IMR-90 (cell line): ENCODE measurements at regions of chr2 and their contacts with region 1.

Region 1: GRCh38 chr2:98649135-98649991 is 41.0 kb downstream of the UNC50 start:
- DNase-seq: peak; percentile 71
- ATAC-seq: peak; percentile 100
- H3K4me3 ChIP-seq: no peak overlapping the region
- H3K27ac ChIP-seq: no peak overlapping the region
- H3K4me1 ChIP-seq: no peaks in the 10 kb centered on the region
- H3K27me3 ChIP-seq: peaks cover 4% of the 10 kb centered on the region
- CTCF ChIP-seq: peak; percentile 96
- POLR2A ChIP-seq: no peak
- RAD21 ChIP-seq: peak; percentile 92

Region 2: DNA sequence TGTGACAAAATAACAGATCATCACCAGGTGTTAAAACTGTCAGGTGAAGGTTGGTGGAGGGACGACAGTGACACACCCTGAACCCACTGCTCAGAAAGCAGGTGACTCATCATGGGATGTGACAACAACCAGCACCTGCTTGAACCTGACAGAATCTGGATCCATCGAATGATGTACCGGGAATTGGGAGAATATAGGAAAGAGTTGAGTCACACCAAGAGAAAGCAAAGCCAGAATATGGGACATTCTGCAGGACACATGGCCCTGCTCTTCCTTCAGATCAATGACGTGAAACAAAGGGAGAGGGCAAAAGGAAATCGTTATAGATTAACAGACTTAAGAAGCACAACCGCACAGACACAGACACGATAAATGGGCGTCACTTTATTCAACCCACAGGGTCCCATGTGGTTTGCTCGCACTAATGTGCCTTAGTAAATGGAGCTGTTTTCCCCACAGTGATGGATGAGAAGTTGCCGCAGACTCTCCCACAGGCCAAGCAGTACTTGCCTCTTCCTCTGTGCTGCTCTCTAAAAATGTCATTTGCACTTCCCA is 186.5 kb after region 1 on chr2:
- CTCF ChIA-PET with region 1: interaction called, 12 read pairs
- POLR2A ChIA-PET with region 1: no interaction called
- dilution Hi-C with region 1: no loop called
- in situ Hi-C with region 1: loop called (anchors 10 kb)
- intact Hi-C with region 1: loop called (anchors 1 kb)
- DNase-seq: no peak
- ATAC-seq: no peak
- H3K4me3 ChIP-seq: no peak overlapping the region
- H3K27ac ChIP-seq: no peak overlapping the region
- H3K4me1 ChIP-seq: no peaks in the 10 kb centered on the region
- H3K27me3 ChIP-seq: peaks cover 16% of the 10 kb centered on the region
- CTCF ChIP-seq: no peak
- POLR2A ChIP-seq: no peak
- RAD21 ChIP-seq: no peak

Region 3: DNA sequence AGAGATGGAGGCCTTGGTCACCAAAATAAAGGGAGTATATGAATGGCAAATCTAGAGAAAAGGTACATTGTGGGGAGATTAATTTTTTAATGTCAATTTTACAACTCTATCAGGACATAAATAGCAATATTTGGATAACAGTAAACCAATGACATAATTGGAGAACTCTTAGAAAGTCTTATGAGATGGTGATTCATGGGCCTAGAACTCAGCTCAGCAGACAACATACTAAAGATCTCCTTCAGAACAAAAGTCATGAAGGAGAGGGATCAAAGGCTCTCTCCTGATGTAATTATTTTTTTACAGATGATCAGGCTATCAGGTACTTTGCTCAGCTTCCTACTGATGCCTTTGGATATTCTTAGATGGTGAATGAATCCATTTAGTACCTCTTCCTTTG is 196.7 kb after region 1 on chr2:
- CTCF ChIA-PET with region 1: no interaction called
- POLR2A ChIA-PET with region 1: no interaction called
- dilution Hi-C with region 1: no loop called
- in situ Hi-C with region 1: loop called (anchors 10 kb)
- intact Hi-C with region 1: no loop called
- DNase-seq: peak; percentile 30
- ATAC-seq: no peak
- H3K4me3 ChIP-seq: no peak overlapping the region
- H3K27ac ChIP-seq: no peak overlapping the region
- H3K4me1 ChIP-seq: no peaks in the 10 kb centered on the region
- H3K27me3 ChIP-seq: no peaks in the 10 kb centered on the region; the same call in none of the 2 replicates
- CTCF ChIP-seq: no peak
- POLR2A ChIP-seq: no peak
- RAD21 ChIP-seq: no peak

Region 4: GRCh38 chr2:99066075-99066958 is 417.0 kb after region 1 on chr2:
- CTCF ChIA-PET with region 1: interaction called, 20 read pairs
- POLR2A ChIA-PET with region 1: no interaction called
- dilution Hi-C with region 1: no loop called
- in situ Hi-C with region 1: loop called (anchors 5 kb)
- intact Hi-C with region 1: loop called (anchors 1 kb)
- DNase-seq: peak; percentile 61
- ATAC-seq: peak; percentile 97
- H3K4me3 ChIP-seq: no peak overlapping the region
- H3K27ac ChIP-seq: no peak overlapping the region
- H3K4me1 ChIP-seq: no peaks in the 10 kb centered on the region
- H3K27me3 ChIP-seq: peaks cover 5% of the 10 kb centered on the region
- CTCF ChIP-seq: peak; percentile 60
- POLR2A ChIP-seq: no peak
- RAD21 ChIP-seq: peak; percentile 48

Region 5: GRCh38 chr2:99507937-99508818 is 858.8 kb after region 1 on chr2:
- CTCF ChIA-PET with region 1: no interaction called
- POLR2A ChIA-PET with region 1: no interaction called
- dilution Hi-C with region 1: no loop called
- in situ Hi-C with region 1: loop called (anchors 25 kb)
- intact Hi-C with region 1: no loop called
- DNase-seq: no peak
- ATAC-seq: no peak
- H3K4me3 ChIP-seq: no peak overlapping the region
- H3K27ac ChIP-seq: no peak overlapping the region
- H3K4me1 ChIP-seq: no peaks in the 10 kb centered on the region
- H3K27me3 ChIP-seq: peaks cover 11% of the 10 kb centered on the region
- CTCF ChIP-seq: no peak
- POLR2A ChIP-seq: no peak
- RAD21 ChIP-seq: no peak